ENCODE measurements at regions of chr17 and their contacts with region 1.

Region 1: DNA sequence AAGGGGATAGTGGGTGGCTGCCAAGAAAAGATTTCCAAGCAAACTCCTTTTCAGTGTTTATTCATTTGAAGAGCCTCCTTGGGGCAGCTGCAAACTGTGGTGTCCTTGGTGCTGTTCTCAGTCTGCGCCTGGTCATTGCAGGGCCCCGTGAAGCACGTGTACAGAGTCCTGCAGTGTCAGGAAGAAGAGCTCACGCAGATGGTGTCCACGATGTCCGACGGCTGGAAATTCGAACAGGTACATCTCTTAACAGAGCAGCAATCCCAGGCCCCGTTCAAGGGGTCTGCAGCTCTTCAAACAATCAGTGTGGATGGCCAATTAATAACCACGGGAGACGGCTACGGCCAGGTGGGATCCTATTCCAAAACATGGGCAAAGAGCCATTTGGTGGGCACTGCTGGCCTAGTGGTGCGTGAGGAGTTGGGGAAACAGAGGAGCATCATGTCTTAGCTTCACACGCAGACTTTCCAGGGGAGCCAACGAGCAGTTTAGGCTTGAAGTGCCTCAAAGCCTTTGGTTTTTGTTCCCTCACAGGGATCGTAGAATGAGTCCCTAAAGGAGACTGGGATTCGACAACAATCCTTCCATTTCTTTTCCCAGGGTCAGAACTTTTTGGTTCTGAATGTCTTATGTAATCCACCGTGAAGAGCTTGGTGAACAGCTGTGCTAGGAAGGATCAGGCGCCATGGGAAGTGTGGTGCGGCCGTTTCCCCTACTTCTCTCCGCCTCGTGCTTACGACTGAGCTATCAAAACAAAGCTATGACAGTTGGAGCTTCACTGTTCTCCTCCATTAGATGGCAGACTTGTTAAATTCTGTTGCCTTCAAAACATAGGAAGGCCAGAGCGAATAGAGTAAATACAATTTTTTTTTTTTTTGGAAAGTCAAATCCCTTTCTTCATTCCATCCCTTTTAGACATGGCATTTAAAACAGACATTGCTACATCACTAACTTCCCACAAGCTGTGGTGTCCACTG is 12.6 kb downstream of the KCTD2 start:
- DNase-seq: peak; percentile 77
- H3K4me3 ChIP-seq: no peak overlapping the region
- H3K27ac ChIP-seq: no peak overlapping the region
- H3K4me1 ChIP-seq: no peaks in the 10 kb centered on the region
- H3K27me3 ChIP-seq: no peaks in the 10 kb centered on the region
- CTCF ChIP-seq: peak; percentile 21 to 39
- POLR2A ChIP-seq: no peak

Region 2: DNA sequence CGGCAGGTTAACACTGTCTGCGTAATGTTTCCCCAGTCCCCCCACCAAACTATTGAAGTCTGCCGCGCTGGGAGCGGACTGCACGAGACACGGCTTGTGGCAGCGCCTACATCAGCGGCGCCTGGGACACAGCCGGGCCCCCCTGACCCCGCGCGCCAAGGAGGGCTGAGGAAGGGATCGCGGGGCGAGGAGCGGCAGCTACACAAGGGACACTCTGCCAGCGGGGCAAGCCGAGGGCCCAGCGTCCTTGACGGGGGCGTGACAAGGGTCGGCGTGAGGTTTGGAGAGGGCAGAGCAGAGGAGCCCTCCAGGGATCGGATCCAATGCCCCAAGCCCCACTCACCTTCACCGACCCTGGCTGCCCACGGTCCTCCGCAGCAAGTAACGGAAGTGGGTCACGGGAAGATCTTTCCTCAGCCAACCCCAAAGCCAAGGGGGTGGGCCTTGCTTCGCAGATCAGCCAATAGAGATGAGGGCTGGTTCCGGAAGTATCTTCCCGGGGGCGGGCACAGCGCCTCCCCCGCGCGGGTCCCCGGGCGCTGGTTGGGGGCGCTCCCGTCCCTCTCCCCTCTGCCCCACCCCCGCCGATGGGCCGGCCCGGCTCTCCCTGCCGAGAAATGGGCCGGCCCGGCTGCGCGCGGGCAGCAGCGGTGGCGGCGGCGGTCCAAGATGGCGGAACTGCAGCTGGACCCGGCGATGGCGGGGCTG is 12.9 kb before region 1 on chr17 and contains the starts of genes ATP5PD and KCTD2:
- CTCF ChIA-PET with region 1: interaction called, 12 read pairs
- POLR2A ChIA-PET with region 1: no interaction called
- dilution Hi-C with region 1: no loop called
- intact Hi-C with region 1: no loop called
- DNase-seq: peak; percentile 98
- H3K4me3 ChIP-seq: peak within 1 kb of the TSS; percentile 58 to 93 (median 67)
- H3K27ac ChIP-seq: peak within 1 kb of the TSS; percentile 19
- H3K4me1 ChIP-seq: peaks cover 13% of the 10 kb centered on the region
- H3K27me3 ChIP-seq: no peaks in the 10 kb centered on the region
- CTCF ChIP-seq: no peak
- POLR2A ChIP-seq: peak; percentile 93
- total RNA-seq, gene ATP5PD: 200 and 202 TPM in 2 replicates
- total RNA-seq, gene KCTD2: 20.6 and 23.2 TPM in 2 replicates

Region 3: GRCh38 chr17:75069783-75070182 is 10.1 kb after region 1 on chr17:
- CTCF ChIA-PET with region 1: interaction called, 27 read pairs
- POLR2A ChIA-PET with region 1: no interaction called
- dilution Hi-C with region 1: no loop called
- intact Hi-C with region 1: no loop called
- DNase-seq: peak; percentile 45
- H3K4me3 ChIP-seq: no peak overlapping the region
- H3K27ac ChIP-seq: no peak overlapping the region
- H3K4me1 ChIP-seq: peaks cover 6% of the 10 kb centered on the region
- H3K27me3 ChIP-seq: no peaks in the 10 kb centered on the region
- CTCF ChIP-seq: peak in 1 of 2 donors; percentile 23
- POLR2A ChIP-seq: no peak

Region 4: GRCh38 chr17:75087558-75088453 is 28.1 kb after region 1 on chr17 and contains the start of gene SLC16A5:
- CTCF ChIA-PET with region 1: interaction called, 13 read pairs
- POLR2A ChIA-PET with region 1: interaction called, 3 read pairs
- dilution Hi-C with region 1: no loop called
- intact Hi-C with region 1: no loop called
- DNase-seq: peak; percentile 81
- H3K4me3 ChIP-seq: peak within 1 kb of the TSS; percentile 23 to 52 (median 46)
- H3K27ac ChIP-seq: peak within 1 kb of the TSS; percentile 88
- H3K4me1 ChIP-seq: peaks cover 42% of the 10 kb centered on the region
- H3K27me3 ChIP-seq: no peaks in the 10 kb centered on the region
- CTCF ChIP-seq: no peak
- POLR2A ChIP-seq: peak; percentile 74
- total RNA-seq, gene SLC16A5: 16.4 and 17.4 TPM in 2 replicates

Region 5: GRCh38 chr17:75131280-75132017 is 71.8 kb after region 1 on chr17 and contains the start of gene NT5C:
- CTCF ChIA-PET with region 1: interaction called, 14 read pairs
- POLR2A ChIA-PET with region 1: no interaction called
- dilution Hi-C with region 1: no loop called
- intact Hi-C with region 1: no loop called
- DNase-seq: peak; percentile 73
- H3K4me3 ChIP-seq: peak within 1 kb of the TSS; percentile 47 to 53 (median 50)
- H3K27ac ChIP-seq: peak within 1 kb of the TSS; percentile 51
- H3K4me1 ChIP-seq: peaks cover 9% of the 10 kb centered on the region
- H3K27me3 ChIP-seq: no peaks in the 10 kb centered on the region
- CTCF ChIP-seq: peak; percentile 72
- POLR2A ChIP-seq: peak; percentile 83
- total RNA-seq, gene NT5C: 32.6 and 39.2 TPM in 2 replicates

Region 6: GRCh38 chr17:75173526-75173925 is 113.9 kb after region 1 on chr17:
- CTCF ChIA-PET with region 1: interaction called, 20 read pairs
- POLR2A ChIA-PET with region 1: no interaction called
- dilution Hi-C with region 1: no loop called
- intact Hi-C with region 1: no loop called
- DNase-seq: no peak
- H3K4me3 ChIP-seq: no peak overlapping the region
- H3K27ac ChIP-seq: no peak overlapping the region
- H3K4me1 ChIP-seq: no peaks in the 10 kb centered on the region
- H3K27me3 ChIP-seq: no peaks in the 10 kb centered on the region
- CTCF ChIP-seq: no peak
- POLR2A ChIP-seq: no peak

Region 7: GRCh38 chr17:75199886-75200618 is 140.4 kb after region 1 on chr17:
- CTCF ChIA-PET with region 1: interaction called, 62 read pairs
- POLR2A ChIA-PET with region 1: no interaction called
- dilution Hi-C with region 1: no loop called
- intact Hi-C with region 1: no loop called
- DNase-seq: no peak
- H3K4me3 ChIP-seq: no peak overlapping the region
- H3K27ac ChIP-seq: no peak overlapping the region
- H3K4me1 ChIP-seq: no peaks in the 10 kb centered on the region
- H3K27me3 ChIP-seq: no peaks in the 10 kb centered on the region
- CTCF ChIP-seq: no peak
- POLR2A ChIP-seq: no peak